Colonic mucosa (tissue), 4 donors: ENCODE measurements at regions of chr7 and their contacts with region 1.

Region 1: DNA sequence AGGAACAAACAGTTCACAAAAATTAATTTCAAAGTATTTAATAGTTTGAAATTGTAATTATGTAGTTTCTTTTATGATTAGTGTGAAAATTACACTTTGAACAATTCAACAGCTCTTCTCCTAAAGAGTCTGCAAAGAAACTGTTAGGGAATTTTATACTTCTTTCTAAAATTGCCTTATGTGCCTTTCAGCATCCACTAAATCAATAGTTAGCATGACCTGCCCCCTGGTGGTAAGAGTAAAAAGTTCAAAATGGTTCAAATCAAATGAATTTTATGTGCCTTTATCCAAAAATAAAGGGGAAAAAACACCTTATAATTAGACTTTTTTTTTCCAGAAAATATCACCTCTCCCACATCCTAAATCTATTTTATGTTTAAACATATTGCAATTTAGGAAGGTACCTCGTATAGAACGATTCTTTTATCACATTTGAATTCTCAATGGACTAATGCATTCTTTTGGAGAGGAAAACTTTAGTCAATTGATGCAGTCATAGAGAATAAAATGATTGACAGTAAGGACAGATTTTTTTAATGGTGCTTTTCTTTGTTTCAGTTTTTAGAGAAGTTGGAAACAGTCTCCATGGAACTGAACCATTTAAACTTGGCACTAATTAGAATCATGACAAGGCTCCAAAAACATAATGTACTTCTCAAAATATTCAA is 163.7 kb downstream of the SEMA3D start:
- DNase-seq: peak; percentile 38
- H3K4me3 ChIP-seq: no peak overlapping the region
- H3K27ac ChIP-seq: no peak overlapping the region
- H3K4me1 ChIP-seq: no peaks in the 10 kb centered on the region
- H3K27me3 ChIP-seq: no peaks in the 10 kb centered on the region
- CTCF ChIP-seq: peak; percentile 42

Region 2: GRCh38 chr7:83936056-83936708 is 1087.0 kb before region 1 on chr7:
- intact Hi-C with region 1: loop called (anchors 5 kb)
- DNase-seq: peak; percentile 59
- H3K4me3 ChIP-seq: no peak overlapping the region
- H3K27ac ChIP-seq: no peak overlapping the region
- H3K4me1 ChIP-seq: no peaks in the 10 kb centered on the region
- H3K27me3 ChIP-seq: no peaks in the 10 kb centered on the region
- CTCF ChIP-seq: peak; percentile 71

Region 3: GRCh38 chr7:83976295-83976694 is 1046.9 kb before region 1 on chr7:
- intact Hi-C with region 1: loop called (anchors 5 kb)
- DNase-seq: no peak
- H3K4me3 ChIP-seq: no peak overlapping the region
- H3K27ac ChIP-seq: no peak overlapping the region
- H3K4me1 ChIP-seq: no peaks in the 10 kb centered on the region
- H3K27me3 ChIP-seq: no peaks in the 10 kb centered on the region
- CTCF ChIP-seq: peak; percentile 54